ENCODE measurements at regions of chr14 and their contacts with region 1.

Region 1: DNA sequence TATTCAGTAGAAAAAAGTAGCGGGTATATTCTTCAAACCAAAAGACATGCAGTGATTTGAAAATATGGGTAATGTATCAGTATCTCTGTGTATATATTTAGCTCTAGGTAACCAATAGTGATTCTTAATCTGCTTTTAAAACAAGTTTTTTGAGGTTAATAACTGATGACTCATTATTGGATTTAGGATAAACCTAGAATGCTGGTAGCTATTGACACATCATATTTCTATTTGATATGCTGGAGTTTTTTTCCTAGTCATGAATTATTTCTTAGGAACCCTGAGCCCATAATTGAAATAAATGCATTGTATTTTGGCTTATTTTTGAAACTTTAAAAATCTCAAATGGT is 15.5 kb downstream of the ARF6 start:
- DNase-seq: no peak
- ATAC-seq: no peak
- H3K4me3 ChIP-seq: no peak overlapping the region
- H3K27ac ChIP-seq: peak overlapping the region in 7 of 10 donors; percentile 6 to 86 (median 33)
- H3K4me1 ChIP-seq: peaks cover 0 to 64% (median 7%) of the 10 kb centered on the region in 9 donors
- H3K27me3 ChIP-seq: no peaks in the 10 kb centered on the region
- CTCF ChIP-seq: no peak

Region 2: DNA sequence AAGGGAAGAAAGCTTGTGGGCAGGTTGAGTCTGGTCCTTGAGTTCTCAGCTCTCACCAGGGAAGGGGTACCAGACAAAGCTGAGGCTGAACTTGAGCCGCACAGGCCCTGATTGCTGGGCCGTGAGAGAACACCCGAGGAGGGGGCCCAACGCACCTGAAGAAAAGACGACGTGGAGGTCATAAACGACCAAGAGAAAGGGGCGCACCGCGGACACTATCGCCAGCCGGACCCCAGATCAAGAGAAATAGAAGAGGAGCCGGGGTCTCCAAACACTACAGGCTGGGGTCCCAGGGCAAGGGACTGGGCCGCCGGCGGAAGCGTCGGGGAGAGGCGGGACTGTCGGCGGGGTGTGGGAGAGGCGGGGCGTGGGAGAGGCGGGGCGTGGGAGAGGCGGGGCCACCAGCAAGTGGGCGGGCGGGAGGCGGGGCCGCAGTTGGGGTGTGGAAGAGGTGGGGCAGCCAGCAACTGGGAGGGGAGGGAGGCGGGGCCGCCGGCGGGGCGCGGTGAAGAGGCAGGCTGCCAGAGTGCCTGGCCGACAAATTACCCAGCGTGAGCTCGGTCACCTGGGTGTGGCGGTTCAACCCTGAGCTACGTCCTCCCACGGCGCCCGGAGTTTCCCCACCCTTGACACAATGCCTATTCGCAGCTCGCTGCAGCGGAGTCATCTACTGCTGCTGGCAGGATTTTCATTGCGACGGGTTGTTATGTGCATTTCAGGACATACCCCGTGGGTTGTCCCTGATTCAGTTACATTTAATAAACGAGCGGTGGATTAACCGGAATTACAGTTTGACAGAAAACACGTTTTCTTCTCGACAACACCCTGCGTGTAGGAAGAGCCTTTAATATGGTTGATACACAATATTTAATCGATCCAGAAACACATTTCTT is 40.3 kb before region 1 on chr14:
- intact Hi-C with region 1: no loop called
- DNase-seq: peak; percentile 96 to 98
- ATAC-seq: peak; percentile 95 to 98 (median 97)
- H3K4me3 ChIP-seq: peak overlapping the region; percentile 22 to 75 (median 62)
- H3K27ac ChIP-seq: peak overlapping the region; percentile 75 to 97 (median 94)
- H3K4me1 ChIP-seq: peaks cover 0 to 56% (median 21%) of the 10 kb centered on the region in 9 donors
- H3K27me3 ChIP-seq: no peaks in the 10 kb centered on the region
- CTCF ChIP-seq: peak in 1 of 9 donors; percentile 4

Region 3: DNA sequence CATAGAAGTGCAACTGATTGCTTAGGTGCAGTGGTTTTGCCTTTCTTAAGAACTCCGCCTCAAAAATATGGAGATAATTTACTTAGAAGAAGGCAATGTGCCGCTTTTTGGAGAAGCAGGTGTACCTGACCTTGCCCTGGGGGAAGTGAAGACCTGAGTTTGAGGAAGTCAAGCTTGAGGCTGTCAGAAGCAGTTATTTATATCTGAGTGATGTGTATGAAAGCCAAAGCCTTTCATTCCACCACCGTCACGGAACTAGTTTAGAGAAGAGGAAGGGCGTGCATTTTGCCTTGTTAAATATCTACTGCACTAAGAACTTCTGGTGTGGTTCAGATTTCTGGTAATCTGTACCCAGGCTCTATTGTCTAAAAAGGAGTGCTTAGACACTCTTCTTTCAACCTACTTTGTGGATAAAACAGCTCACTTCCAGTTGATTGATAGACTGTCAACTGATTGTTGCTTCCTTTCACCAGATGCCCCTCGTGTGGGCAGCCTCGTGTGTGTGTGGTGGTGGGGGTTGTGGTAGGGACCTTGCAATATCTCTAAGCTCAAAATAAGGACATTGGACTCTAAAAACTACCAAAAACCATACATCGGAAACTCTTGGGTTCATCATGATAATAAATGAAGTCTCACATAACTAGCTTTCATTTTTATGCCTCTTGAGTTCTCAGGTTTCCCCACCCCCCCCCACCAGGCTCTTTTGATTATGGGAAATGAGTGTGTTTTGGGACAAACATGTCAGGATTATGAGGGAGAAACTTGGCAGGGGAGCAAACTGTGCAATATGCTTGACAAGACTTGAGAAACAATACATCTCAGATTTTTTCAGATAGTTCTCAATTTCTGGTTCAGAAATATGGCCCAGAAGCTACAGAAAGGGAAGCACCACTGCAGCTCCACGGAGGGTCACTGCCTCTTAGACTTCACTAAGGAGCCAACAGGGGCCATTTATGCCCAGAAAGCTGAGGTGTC is 63.0 kb after region 1 on chr14:
- intact Hi-C with region 1: loop called in 2 of 10 experiments (anchors 10 kb)
- DNase-seq: no peak
- ATAC-seq: peak; percentile 44 to 74 (median 60)
- H3K4me3 ChIP-seq: peak overlapping the region in 1 of 10 donors; percentile 6
- H3K27ac ChIP-seq: peak overlapping the region in 9 of 10 donors; percentile 17 to 92 (median 60)
- H3K4me1 ChIP-seq: peaks cover 0 to 69% (median 35%) of the 10 kb centered on the region in 9 donors
- H3K27me3 ChIP-seq: no peaks in the 10 kb centered on the region
- CTCF ChIP-seq: no peak